ENCODE measurements at regions of chr11 and their contacts with region 1.

Region 1: GRCh38 chr11:111851636-111852035 is 19.7 kb downstream of the ALG9 start:
- DNase-seq: no peak
- H3K4me3 ChIP-seq: no peak overlapping the region
- H3K27ac ChIP-seq: no peak overlapping the region
- H3K4me1 ChIP-seq: no peaks in the 10 kb centered on the region
- H3K27me3 ChIP-seq: no peaks in the 10 kb centered on the region
- CTCF ChIP-seq: peak; percentile 17 to 39

Region 2: DNA sequence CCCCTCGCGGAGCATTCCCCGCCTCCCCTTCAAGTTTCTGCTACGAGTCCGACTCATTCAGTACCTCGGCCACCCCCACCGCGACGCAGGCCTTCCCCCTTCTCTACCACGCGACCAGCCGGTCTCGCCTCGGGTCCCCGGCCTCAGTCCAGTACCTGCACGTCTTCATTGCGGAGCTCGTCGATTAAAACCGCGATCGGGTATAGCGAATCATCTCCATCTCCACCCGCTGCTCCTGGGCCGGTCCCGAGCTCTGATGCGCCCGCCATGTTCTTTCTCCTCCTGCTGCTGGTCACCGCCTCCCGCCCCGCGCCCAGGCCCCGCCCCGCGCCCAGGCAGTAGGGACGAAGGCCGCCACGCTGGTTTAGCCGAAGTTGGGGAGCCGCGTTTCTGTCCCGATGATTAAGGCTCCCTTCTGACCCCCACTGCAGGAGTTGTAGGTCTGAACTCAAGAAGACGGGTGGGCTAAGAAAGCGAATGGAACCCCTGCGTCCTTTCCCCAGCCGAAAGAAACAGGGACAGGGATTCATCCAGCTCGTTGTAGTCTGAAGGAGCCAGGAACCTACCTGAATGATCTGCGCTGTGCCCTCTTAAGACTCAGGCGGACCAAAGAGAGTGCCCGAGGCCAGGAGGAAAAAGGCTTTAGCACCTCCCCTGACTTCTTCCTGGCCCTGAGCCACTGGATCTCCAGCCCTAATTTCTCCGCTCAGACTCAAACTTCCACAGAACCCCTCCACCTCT is 85.4 kb before region 1 on chr11 and contains the start of gene PPP2R1B:
- CTCF ChIA-PET with region 1: interaction called, 11 read pairs
- dilution Hi-C with region 1: no loop called
- in situ Hi-C with region 1: no loop called
- intact Hi-C with region 1: no loop called
- DNase-seq: peak; percentile 81
- H3K4me3 ChIP-seq: peak within 1 kb of the TSS; percentile 77 to 98 (median 97)
- H3K27ac ChIP-seq: peak within 1 kb of the TSS; percentile 78
- H3K4me1 ChIP-seq: peaks cover 19% of the 10 kb centered on the region
- H3K27me3 ChIP-seq: no peaks in the 10 kb centered on the region
- CTCF ChIP-seq: no peak
- total RNA-seq, gene PPP2R1B: 26.2 to 34.7 TPM

Region 3: DNA sequence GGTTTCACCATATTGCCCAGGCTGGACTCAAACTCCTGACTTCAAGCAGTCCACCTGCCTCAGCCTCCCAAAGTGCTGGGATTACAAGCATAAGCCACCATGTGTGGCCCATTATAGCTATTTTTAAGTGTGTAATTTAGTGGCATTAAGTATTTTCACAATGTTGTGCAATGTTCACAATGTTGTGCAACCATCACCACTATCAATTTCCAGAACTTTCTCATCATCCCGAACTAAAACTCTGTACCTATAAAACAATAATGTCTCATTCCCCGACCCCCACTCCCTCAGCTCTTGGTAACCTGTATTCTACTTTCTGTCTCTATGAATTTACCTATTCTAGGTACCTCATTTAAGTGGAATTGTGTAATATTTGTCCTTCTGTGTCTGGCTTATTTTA is 35.2 kb after region 1 on chr11:
- CTCF ChIA-PET with region 1: no interaction called
- dilution Hi-C with region 1: no loop called
- in situ Hi-C with region 1: no loop called
- intact Hi-C with region 1: no loop called
- DNase-seq: no peak
- H3K4me3 ChIP-seq: no peak overlapping the region
- H3K27ac ChIP-seq: no peak overlapping the region
- H3K4me1 ChIP-seq: no peaks in the 10 kb centered on the region
- H3K27me3 ChIP-seq: no peaks in the 10 kb centered on the region
- CTCF ChIP-seq: no peak

Region 4: DNA sequence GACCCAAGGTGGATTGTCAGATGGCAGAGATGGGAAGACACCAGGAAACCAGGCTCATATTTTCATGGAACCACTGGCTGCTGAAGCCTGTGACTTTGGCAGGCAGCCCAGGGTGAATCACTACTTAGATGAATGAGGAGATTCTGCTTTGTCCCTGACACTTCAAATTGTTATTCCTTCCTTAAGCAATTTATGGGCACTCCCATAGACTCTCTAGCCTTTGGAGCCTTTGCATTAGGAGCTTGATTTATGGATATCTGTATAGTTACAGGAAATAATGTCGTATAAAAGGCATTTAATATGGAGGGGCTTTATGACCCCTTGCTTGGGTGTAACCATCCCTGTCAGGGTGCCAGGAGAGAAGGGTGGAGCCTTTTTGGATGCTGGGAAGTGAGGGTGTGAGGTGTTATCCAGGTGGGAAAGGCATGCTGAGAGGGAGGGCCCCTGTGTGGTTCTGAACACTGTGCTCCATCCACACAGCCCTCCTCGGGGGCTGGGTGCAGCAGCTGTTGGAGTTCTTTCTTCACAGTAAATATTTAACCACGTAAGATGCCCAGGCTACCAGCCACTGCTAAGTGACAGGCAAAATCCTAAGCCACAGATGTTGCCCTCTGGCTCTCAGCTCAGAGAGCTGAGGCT is 277.0 kb after region 1 on chr11:
- CTCF ChIA-PET with region 1: no interaction called
- dilution Hi-C with region 1: no loop called
- in situ Hi-C with region 1: no loop called
- intact Hi-C with region 1: no loop called
- DNase-seq: peak; percentile 88
- H3K4me3 ChIP-seq: no peak overlapping the region
- H3K27ac ChIP-seq: peak overlapping the region; percentile 67
- H3K4me1 ChIP-seq: peaks cover 44% of the 10 kb centered on the region
- H3K27me3 ChIP-seq: no peaks in the 10 kb centered on the region
- CTCF ChIP-seq: no peak

Measured in mammary epithelial cell (primary cell).